ENCODE measurements at regions of chr12 and their contacts with region 1.

Region 1: GRCh38 chr12:14379508-14379907 is 14.0 kb downstream of the ATF7IP start:
- DNase-seq: no peak
- H3K4me3 ChIP-seq: no peak overlapping the region
- H3K27ac ChIP-seq: no peak overlapping the region
- H3K4me1 ChIP-seq: no peaks in the 10 kb centered on the region
- H3K27me3 ChIP-seq: no peaks in the 10 kb centered on the region
- CTCF ChIP-seq: no peak

Region 2: DNA sequence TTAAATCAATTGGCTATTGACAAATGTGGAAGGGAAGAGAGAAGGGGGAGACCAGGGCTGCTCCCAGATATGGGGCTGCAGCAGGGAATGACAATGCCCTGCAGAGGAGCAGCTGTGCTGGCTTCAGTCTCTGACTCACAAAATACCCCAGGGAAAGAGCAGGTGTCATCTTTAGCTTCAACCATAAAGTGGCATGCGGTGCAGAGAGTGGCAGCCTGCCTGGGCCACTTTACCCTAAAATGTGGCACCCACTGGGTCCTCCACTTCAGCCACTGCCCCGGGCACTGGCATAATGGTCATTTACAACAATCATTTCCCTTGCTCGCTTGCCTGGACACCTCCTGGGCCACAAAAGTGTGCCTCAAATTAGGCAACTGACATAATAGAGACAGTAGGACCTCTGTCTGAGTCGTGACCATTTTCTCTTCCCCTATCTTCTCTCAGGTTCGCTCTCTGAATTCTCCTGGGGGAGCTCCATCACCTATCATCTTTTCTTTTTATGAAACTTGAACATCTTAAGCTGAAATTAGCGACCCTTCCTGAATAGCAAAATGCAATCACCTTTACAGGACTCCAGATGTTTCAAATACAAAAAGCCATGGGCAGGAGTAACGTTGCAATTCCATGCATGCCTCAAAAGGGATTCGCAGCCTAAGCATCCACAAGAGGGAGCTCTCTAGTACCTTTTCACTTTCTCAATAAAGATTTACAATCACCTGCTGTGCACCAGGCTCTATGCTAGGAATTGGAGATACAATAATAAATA is 193.9 kb before region 1 on chr12:
- intact Hi-C with region 1: loop called (anchors 5 kb)
- DNase-seq: peak; percentile 75
- H3K4me3 ChIP-seq: no peak overlapping the region
- H3K27ac ChIP-seq: no peak overlapping the region
- H3K4me1 ChIP-seq: no peaks in the 10 kb centered on the region
- H3K27me3 ChIP-seq: no peaks in the 10 kb centered on the region
- CTCF ChIP-seq: peak; percentile 46

Region 3: DNA sequence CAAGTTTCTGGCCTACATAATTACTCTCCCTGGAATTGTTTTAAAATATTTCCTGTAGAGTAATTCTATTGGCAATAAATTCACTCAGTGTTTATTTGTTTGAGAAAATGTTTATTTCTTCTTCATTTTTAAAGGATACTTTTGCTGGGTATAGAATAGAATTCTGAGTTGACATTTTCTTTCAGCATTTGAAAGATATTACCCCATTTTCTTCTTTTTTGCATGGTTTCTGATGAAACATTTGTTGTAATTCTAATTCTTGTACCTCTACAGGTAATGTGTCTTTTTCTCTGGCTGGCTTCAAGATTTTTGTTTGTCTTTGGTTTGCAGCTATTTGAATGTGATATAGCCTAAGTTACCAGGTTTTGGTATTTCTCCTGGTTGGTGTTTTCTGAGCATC is 39.1 kb before region 1 on chr12:
- intact Hi-C with region 1: no loop called
- DNase-seq: no peak
- H3K4me3 ChIP-seq: no peak overlapping the region
- H3K27ac ChIP-seq: no peak overlapping the region
- H3K4me1 ChIP-seq: no peaks in the 10 kb centered on the region
- H3K27me3 ChIP-seq: no peaks in the 10 kb centered on the region
- CTCF ChIP-seq: no peak

Measured in colonic mucosa (tissue), 4 donors.